Activated CD4-positive, alpha-beta T cell treated with anti-CD3 and anti-CD28 coated beads for 36 hours (primary cell): ENCODE measurements at regions of chr4 and their contacts with region 1.

Region 1: GRCh38 chr4:17667653-17668201 is 53.3 kb downstream of the MED28 start:
- DNase-seq: no peak
- ATAC-seq: no peak
- H3K4me3 Mint-ChIP-seq: no peak overlapping the region
- H3K27ac Mint-ChIP-seq: no peak overlapping the region
- H3K4me1 Mint-ChIP-seq: no peaks in the 10 kb centered on the region
- H3K27me3 Mint-ChIP-seq: peaks cover 20% of the 10 kb centered on the region

Region 2: GRCh38 chr4:17647927-17648326 is 19.8 kb before region 1 on chr4:
- CTCF ChIA-PET with region 1: no interaction called
- POLR2A ChIA-PET with region 1: interaction called, 11 read pairs
- intact Hi-C with region 1: no loop called
- DNase-seq: no peak
- ATAC-seq: peak; percentile 23
- H3K4me3 Mint-ChIP-seq: no peak overlapping the region
- H3K27ac Mint-ChIP-seq: no peak overlapping the region
- H3K4me1 Mint-ChIP-seq: peaks cover 9% of the 10 kb centered on the region
- H3K27me3 Mint-ChIP-seq: no peaks in the 10 kb centered on the region